ENCODE measurements at regions of chr6 and their contacts with region 1.

Region 1: GRCh38 chr6:63571881-63572732 is at the starts of genes LOC128125822 and PTP4A1:
- DNase-seq: peak; percentile 95
- ATAC-seq: peak; percentile 90
- H3K4me3 ChIP-seq: peak within 1 kb of the TSS; percentile 78 to 95 (median 89)
- H3K27ac ChIP-seq: peak within 1 kb of the TSS; percentile 96
- H3K4me1 ChIP-seq: peaks cover 61% of the 10 kb centered on the region
- H3K27me3 ChIP-seq: no peaks in the 10 kb centered on the region; a peak in 1 of 5 replicates
- CTCF ChIP-seq: peak; percentile 31
- EP300 ChIP-seq: peak; percentile 58 to 70
- POLR2A ChIP-seq: peak; percentile 83 to 89
- RAD21 ChIP-seq: no peak; the same call in 1 of the 2 replicates
- total RNA-seq, gene PTP4A1: 376 and 681 TPM in 2 replicates

Region 2: GRCh38 chr6:62669831-62670230 is 902.3 kb before region 1 on chr6:
- CTCF ChIA-PET with region 1: no interaction called
- POLR2A ChIA-PET with region 1: no interaction called
- in situ Hi-C with region 1: no loop called
- intact Hi-C with region 1: no loop called
- DNase-seq: no peak
- ATAC-seq: no peak
- H3K4me3 ChIP-seq: no peak overlapping the region
- H3K27ac ChIP-seq: no peak overlapping the region
- H3K4me1 ChIP-seq: no peaks in the 10 kb centered on the region
- H3K27me3 ChIP-seq: no peaks in the 10 kb centered on the region
- CTCF ChIP-seq: no peak
- EP300 ChIP-seq: no peak
- POLR2A ChIP-seq: no peak
- RAD21 ChIP-seq: no peak

Region 3: GRCh38 chr6:63452124-63452523 is 120.0 kb before region 1 on chr6:
- CTCF ChIA-PET with region 1: no interaction called
- POLR2A ChIA-PET with region 1: interaction called, 5 read pairs
- in situ Hi-C with region 1: loop called (anchors 5 kb)
- intact Hi-C with region 1: loop called (anchors 2 kb)
- DNase-seq: peak; percentile 93
- ATAC-seq: peak; percentile 99
- H3K4me3 ChIP-seq: peak overlapping the region in 1 of 3 experiments; percentile 5; a peak in 1 of 6 replicates
- H3K27ac ChIP-seq: peak overlapping the region; percentile 79
- H3K4me1 ChIP-seq: peaks cover 90% of the 10 kb centered on the region
- H3K27me3 ChIP-seq: no peaks in the 10 kb centered on the region
- CTCF ChIP-seq: peak; percentile 17; the same call in 1 of the 2 replicates
- EP300 ChIP-seq: peak; percentile 82 to 94; a peak in 3 of 4 replicates
- POLR2A ChIP-seq: 0 out of 4 replicates have a peak, but pooled peaks of 1 of the 2 experiments have one; percentile 32
- RAD21 ChIP-seq: peak; percentile 47; the same call in 1 of the 2 replicates

Region 4: DNA sequence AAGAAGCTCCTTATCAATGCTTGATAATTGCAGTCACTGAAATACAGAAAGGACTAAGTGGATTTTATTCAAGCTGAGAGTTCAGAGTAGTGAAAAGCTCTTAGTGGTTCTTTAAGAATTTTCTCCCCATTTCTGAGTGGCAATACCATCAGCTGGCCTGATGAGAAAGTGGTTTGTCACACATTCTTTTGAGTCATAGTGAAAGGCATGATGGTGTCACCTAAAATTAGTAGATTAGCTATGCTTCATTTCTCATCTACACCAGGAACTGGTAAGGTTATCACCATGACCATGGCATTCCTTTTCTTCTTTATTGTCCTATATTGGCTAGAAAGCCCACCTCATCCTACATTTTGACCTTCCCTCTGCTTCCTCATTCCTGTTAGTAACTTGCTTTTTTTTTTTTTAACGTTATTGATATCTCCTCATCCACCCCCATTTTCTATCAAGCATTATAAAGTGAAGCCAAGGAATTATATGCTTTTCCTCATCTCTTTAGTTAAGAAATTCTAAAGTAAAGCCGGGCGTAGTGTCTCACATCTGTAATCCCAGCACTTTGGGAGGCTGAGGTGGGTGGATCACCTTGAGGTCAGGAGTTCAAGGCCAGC is 67.2 kb before region 1 on chr6:
- CTCF ChIA-PET with region 1: no interaction called
- POLR2A ChIA-PET with region 1: interaction called, 34 read pairs
- in situ Hi-C with region 1: no loop called
- intact Hi-C with region 1: no loop called
- DNase-seq: no peak
- ATAC-seq: no peak
- H3K4me3 ChIP-seq: no peak overlapping the region
- H3K27ac ChIP-seq: no peak overlapping the region
- H3K4me1 ChIP-seq: peaks cover 68% of the 10 kb centered on the region
- H3K27me3 ChIP-seq: no peaks in the 10 kb centered on the region
- CTCF ChIP-seq: no peak
- EP300 ChIP-seq: no peak
- POLR2A ChIP-seq: no peak
- RAD21 ChIP-seq: no peak

Region 5: DNA sequence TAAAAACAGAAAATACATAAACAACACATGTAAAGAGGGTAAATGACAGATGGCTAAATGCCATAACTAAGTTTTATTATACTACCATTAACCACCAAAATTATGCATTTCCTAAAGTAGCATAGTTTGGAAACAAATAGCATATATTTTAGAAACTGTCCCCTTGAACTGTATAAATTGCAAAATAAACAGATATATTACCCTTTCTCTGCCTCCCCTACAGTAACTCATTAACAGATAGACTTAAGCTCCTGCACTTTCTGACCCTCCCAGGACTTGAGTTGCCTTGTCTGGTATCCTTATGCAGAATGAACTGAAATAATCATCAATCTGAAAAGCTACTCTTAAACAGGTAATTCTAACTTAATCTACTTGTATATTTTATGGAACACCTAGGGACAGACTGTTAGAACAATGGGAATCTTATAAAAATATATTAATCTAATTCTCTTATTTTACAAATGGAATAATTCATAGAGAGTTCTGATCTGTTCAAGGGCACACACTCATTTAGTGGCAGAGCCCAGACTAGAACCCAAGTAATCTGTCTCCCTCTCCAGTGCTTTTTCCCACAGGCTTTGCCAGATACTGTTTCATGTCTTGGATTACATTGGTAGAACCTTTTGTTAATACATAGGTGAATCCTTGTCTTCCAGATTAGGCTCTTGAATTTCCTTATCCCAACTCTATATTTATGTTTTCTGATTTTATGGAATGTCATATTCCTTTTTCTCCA is 50.5 kb before region 1 on chr6:
- CTCF ChIA-PET with region 1: no interaction called
- POLR2A ChIA-PET with region 1: interaction called, 66 read pairs
- in situ Hi-C with region 1: loop called (anchors 5 kb)
- intact Hi-C with region 1: no loop called
- DNase-seq: peak; percentile 76
- ATAC-seq: peak; percentile 82
- H3K4me3 ChIP-seq: peak overlapping the region; percentile 49 to 74 (median 68)
- H3K27ac ChIP-seq: peak overlapping the region; percentile 96
- H3K4me1 ChIP-seq: peaks cover 98% of the 10 kb centered on the region
- H3K27me3 ChIP-seq: no peaks in the 10 kb centered on the region
- CTCF ChIP-seq: no peak
- EP300 ChIP-seq: peak in 1 of 2 experiments; percentile 66; a peak in 2 of 4 replicates
- POLR2A ChIP-seq: peak; percentile 38 to 55; a peak in 2 of 4 replicates
- RAD21 ChIP-seq: no peak

Region 6: GRCh38 chr6:63584125-63584514 is 12.0 kb after region 1 on chr6:
- CTCF ChIA-PET with region 1: no interaction called
- POLR2A ChIA-PET with region 1: interaction called, 12 read pairs
- in situ Hi-C with region 1: no loop called
- intact Hi-C with region 1: no loop called
- DNase-seq: no peak
- ATAC-seq: peak; percentile 33
- H3K4me3 ChIP-seq: no peak overlapping the region
- H3K27ac ChIP-seq: no peak overlapping the region
- H3K4me1 ChIP-seq: peaks cover 9% of the 10 kb centered on the region
- H3K27me3 ChIP-seq: no peaks in the 10 kb centered on the region
- CTCF ChIP-seq: no peak
- EP300 ChIP-seq: no peak
- POLR2A ChIP-seq: peak in 1 of 2 experiments; percentile 65; a peak in 1 of 4 replicates
- RAD21 ChIP-seq: no peak

Region 7: GRCh38 chr6:63635588-63636517 is 63.7 kb after region 1 on chr6 and contains the start of gene PHF3:
- CTCF ChIA-PET with region 1: no interaction called
- POLR2A ChIA-PET with region 1: interaction called, 14 read pairs
- in situ Hi-C with region 1: no loop called
- intact Hi-C with region 1: no loop called
- DNase-seq: peak; percentile 91
- ATAC-seq: peak; percentile 91
- H3K4me3 ChIP-seq: peak within 1 kb of the TSS; percentile 93 to 96 (median 95)
- H3K27ac ChIP-seq: peak within 1 kb of the TSS; percentile 96
- H3K4me1 ChIP-seq: peaks cover 51% of the 10 kb centered on the region
- H3K27me3 ChIP-seq: no peaks in the 10 kb centered on the region; a peak in 1 of 5 replicates
- CTCF ChIP-seq: peak; percentile 62
- EP300 ChIP-seq: peak; percentile 39 to 62
- POLR2A ChIP-seq: peak; percentile 79 to 85
- RAD21 ChIP-seq: peak; percentile 82
- total RNA-seq, gene PHF3: 70.4 and 96.2 TPM in 2 replicates

Measured in HepG2 (cell line).